Lower lobe of right lung (tissue), 2 donors: ENCODE measurements at regions of chr2 and their contacts with region 1.

Region 1: GRCh38 chr2:102020596-102021181 is 28.9 kb downstream of the IL1R2 start:
- DNase-seq: peak; percentile 87
- ATAC-seq: peak; percentile 95 to 96
- H3K4me3 ChIP-seq: no peak overlapping the region
- H3K27ac ChIP-seq: no peak overlapping the region
- H3K4me1 ChIP-seq: peaks cover 36% of the 10 kb centered on the region
- H3K27me3 ChIP-seq: no peaks in the 10 kb centered on the region
- CTCF ChIP-seq: peak; percentile 99

Region 2: DNA sequence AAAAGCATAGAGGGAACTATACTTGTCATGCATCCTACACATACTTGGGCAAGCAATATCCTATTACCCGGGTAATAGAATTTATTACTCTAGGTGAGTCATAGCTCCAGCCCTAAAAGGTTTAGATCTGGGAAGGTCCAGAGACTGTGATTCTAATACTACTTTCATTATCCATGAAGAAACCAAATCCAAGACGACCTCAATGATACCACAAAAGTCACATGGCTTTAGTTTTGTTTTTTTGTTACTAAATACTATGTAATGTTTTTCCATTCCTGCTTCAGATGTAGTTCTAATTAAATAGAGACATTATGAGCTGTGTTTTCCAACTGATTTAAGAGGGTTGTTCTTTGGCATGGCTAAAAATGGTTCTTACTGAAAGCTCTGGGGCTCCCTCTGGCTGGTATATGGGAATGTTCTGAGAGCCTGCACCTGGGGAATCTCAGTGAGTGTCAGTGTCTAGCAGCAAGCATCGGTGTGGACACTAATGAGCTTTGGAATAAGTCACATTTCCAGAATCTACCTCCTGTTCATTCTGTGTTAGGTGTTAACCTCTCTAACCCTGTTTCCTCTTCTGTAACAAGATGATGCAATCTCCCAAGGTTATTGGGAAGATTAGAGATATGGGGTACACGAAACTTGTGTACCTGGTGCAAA is 145.6 kb after region 1 on chr2:
- intact Hi-C with region 1: loop called (anchors 10 kb)
- DNase-seq: no peak
- ATAC-seq: peak; percentile 70 to 84
- H3K4me3 ChIP-seq: no peak overlapping the region
- H3K27ac ChIP-seq: no peak overlapping the region
- H3K4me1 ChIP-seq: peaks cover 35% of the 10 kb centered on the region
- H3K27me3 ChIP-seq: no peaks in the 10 kb centered on the region
- CTCF ChIP-seq: peak; percentile 59

Region 3: DNA sequence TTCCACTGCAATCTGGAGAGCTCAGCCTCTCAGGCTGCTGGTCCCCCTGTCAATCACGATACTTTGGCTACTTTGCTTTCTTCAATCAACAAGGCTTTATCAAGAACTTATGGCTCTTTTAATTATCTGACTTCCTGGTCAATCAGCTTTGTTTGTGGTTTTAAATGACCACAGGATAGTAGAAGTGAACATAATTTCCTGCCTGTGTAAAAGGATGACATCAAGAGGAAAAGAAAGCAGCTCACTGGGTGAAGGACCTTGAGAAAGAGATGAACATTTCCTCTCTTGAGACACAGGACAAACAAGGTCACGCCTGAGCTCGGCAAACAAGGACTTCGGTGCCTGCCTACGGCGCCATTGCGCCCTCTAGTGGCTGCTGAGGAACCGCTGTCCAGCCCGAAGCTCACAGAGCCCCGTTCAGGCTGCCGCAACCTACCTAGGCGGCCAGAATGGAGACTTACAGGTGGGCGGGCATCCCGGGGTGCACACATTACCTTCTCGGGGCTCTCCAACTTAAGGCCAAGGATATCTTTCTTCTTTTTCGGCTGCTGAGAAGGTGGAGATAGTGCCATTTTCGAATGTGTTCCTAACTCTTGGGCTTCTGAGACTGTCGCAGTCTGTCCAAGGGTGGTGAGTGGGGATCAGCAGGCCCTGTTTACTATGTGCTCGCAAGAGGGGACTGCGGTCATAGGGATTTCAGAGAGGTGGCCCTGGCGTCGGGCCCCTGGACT is 220.1 kb after region 1 on chr2:
- intact Hi-C with region 1: loop called (anchors 10 kb)
- DNase-seq: peak; percentile 94
- ATAC-seq: peak; percentile 97
- H3K4me3 ChIP-seq: no peak overlapping the region
- H3K27ac ChIP-seq: peak overlapping the region; percentile 77
- H3K4me1 ChIP-seq: peaks cover 20% of the 10 kb centered on the region
- H3K27me3 ChIP-seq: no peaks in the 10 kb centered on the region
- CTCF ChIP-seq: peak; percentile 98

Region 4: GRCh38 chr2:102592597-102592996 is 571.9 kb after region 1 on chr2:
- intact Hi-C with region 1: no loop called
- DNase-seq: no peak
- ATAC-seq: peak in 1 of 2 donors; percentile 51
- H3K4me3 ChIP-seq: no peak overlapping the region
- H3K27ac ChIP-seq: no peak overlapping the region
- H3K4me1 ChIP-seq: no peaks in the 10 kb centered on the region
- H3K27me3 ChIP-seq: no peaks in the 10 kb centered on the region
- CTCF ChIP-seq: peak; percentile 48